ENCODE measurements at regions of chr17 and their contacts with region 1.

Region 1: GRCh38 chr17:81253358-81254131 is 14.4 kb downstream of the NDUFAF8 start:
- DNase-seq: no peak
- ATAC-seq: peak; percentile 41
- H3K4me3 ChIP-seq: no peak overlapping the region
- H3K27ac ChIP-seq: no peak overlapping the region
- H3K4me1 ChIP-seq: peaks cover 26% of the 10 kb centered on the region
- H3K27me3 ChIP-seq: no peaks in the 10 kb centered on the region
- CTCF ChIP-seq: peak; percentile 94
- EP300 ChIP-seq: no peak
- POLR2A ChIP-seq: no peak
- RAD21 ChIP-seq: peak; percentile 85

Region 2: DNA sequence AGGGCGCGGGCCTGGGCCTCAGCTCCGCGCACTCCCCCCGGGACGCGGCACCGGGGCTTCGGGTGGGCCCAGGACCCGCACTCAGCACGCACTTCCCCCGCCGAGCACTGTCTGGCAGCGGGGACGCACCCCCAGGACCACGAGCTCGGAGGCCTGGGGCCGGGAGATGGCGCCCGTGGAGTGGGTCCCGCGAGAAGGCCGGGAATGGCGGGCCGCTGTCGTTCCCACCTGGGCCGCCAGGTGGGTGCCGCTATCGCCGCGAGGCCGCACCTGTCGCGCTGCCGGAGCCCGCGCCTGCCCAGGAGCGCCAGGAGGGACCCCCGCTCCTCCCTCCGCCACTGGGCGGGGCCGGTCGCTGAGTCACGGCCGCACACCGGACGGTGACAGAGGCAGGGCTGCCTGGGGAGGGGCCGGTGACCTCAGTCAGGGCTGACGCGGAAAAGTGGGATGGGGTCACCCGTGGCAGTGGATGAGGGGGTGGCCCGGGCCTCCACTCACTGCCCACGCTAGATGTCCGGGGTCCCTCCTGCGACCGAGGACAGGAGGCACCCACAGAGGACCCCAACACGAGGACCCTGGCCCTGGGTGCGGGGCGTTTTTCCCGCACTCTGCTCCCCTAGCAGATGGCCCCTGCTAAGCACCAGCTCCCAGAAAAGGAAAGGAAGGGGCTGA is 265.9 kb after region 1 on chr17:
- CTCF ChIA-PET with region 1: interaction called, 3 read pairs
- POLR2A ChIA-PET with region 1: interaction called, 3 read pairs
- in situ Hi-C with region 1: no loop called
- intact Hi-C with region 1: loop called (anchors 2 kb)
- DNase-seq: no peak
- ATAC-seq: peak; percentile 47
- H3K4me3 ChIP-seq: peak overlapping the region; percentile 35 to 75 (median 56)
- H3K27ac ChIP-seq: no peak overlapping the region
- H3K4me1 ChIP-seq: peaks cover 52% of the 10 kb centered on the region
- H3K27me3 ChIP-seq: peaks cover 2 to 43% of the 10 kb centered on the region in 2 experiments; a peak in 4 of 5 replicates
- CTCF ChIP-seq: peak; percentile 66
- EP300 ChIP-seq: no peak
- POLR2A ChIP-seq: no peak
- RAD21 ChIP-seq: peak; percentile 46

Region 3: GRCh38 chr17:81601525-81602120 is 348.1 kb after region 1 on chr17:
- CTCF ChIA-PET with region 1: interaction called, 12 read pairs
- POLR2A ChIA-PET with region 1: no interaction called
- in situ Hi-C with region 1: no loop called
- intact Hi-C with region 1: loop called (anchors 1 kb)
- DNase-seq: peak; percentile 62
- ATAC-seq: peak; percentile 94
- H3K4me3 ChIP-seq: no peak overlapping the region
- H3K27ac ChIP-seq: no peak overlapping the region
- H3K4me1 ChIP-seq: no peaks in the 10 kb centered on the region
- H3K27me3 ChIP-seq: no peaks in the 10 kb centered on the region
- CTCF ChIP-seq: peak; percentile 84
- EP300 ChIP-seq: no peak
- POLR2A ChIP-seq: no peak
- RAD21 ChIP-seq: peak; percentile 54; the same call in 1 of the 2 replicates

Measured in HepG2 (cell line).